A549 (cell line): ENCODE measurements at regions of chr11 and their contacts with region 1.

Region 1: DNA sequence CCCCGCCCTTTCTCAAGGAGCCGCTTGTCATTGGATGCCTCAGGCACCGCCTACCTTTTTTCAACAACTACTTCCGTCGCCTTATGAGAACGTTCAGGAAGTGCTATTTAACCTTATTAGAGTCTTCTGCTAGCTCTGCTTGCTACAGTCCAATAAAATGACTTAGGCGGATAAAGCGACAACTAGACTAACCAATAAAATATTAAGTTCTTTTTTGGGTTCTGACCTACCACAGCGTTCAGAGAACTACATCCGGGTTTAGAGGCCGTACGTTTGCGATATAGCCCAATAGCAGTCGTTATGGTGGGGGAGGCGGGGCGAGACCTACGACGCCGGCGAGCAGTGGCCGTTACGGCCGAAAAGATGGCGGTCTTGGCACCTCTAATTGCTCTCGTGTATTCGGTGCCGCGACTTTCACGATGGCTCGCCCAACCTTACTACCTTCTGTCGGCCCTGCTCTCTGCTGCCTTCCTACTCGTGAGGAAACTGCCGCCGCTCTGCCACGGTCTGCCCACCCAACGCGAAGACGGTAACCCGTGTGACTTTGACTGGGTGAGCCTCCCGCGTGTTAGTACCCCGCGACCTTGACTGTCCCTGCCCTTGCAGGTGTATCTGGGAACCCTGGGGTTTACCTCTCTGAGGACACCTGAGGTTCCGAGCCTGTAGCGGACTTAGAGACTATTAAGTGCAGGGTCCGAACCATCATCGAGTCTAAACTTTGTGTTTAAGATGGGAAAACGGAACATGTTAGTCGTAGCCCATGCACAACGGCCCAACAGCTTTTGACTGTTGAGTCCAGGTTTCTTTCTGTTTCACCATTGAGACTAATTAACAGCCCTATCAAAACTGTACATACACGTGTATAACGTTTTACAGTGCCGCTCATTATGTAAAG is at the start of gene TMX2:
- DNase-seq: peak; percentile 95 to 99
- ATAC-seq: peak; percentile 95 to 97
- H3K4me3 ChIP-seq: peak within 1 kb of the TSS; percentile 95
- H3K27ac ChIP-seq: peak within 1 kb of the TSS; percentile 92 to 96
- H3K4me1 ChIP-seq: peaks cover 32% of the 10 kb centered on the region
- CTCF ChIP-seq: no peak
- EP300 ChIP-seq: no peak
- POLR2A ChIP-seq: peak; percentile 80
- RAD21 ChIP-seq: no peak
- polyA plus RNA-seq, gene TMX2: 168 and 191 TPM in 2 replicates

Region 2: DNA sequence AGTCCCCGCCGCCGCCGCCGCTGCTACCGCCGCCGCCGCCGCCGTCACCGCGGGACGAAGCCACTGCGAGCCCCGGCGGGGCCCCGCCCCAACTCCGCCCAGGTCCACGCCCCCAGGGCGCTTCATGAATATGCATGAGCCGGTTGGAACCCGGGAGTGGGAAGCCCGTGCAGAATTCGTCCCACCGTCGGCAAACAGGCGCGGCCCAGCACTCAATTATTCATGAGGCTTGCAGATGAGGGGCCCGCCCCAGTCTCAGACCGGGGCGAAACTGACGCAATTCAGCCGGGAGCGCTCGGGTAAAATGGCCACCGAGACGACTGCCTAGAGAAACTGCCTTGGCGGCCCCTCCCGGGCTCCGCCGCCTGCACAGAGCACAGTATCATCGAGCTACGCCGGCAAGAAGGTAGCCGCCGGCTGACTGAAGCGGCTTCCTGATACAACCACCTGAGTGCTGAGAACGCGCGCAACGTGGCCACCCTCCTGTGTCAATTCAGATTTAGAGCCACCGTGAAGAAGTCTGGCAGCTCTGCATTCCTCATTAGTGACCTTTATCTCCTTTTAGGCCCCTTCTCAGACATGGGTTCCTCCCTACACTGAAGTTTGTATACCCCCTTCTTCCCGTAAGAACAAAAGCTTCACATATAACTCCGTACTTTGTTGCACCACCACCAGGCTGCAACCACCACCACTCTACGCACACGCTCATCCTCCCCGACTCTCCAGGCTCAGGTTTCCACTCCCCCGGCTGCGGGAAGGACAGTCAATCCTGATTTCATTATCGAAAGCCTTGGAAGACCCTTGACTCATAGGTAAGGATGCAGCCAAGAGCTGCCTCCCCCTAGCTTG is 387.4 kb before region 1 on chr11 and contains the start of gene TNKS1BP1:
- CTCF ChIA-PET with region 1: no interaction called
- POLR2A ChIA-PET with region 1: no interaction called
- DNase-seq: peak; percentile 94 to 97
- ATAC-seq: peak; percentile 63 to 81
- H3K4me3 ChIP-seq: peak within 1 kb of the TSS; percentile 64
- H3K27ac ChIP-seq: peak within 1 kb of the TSS; percentile 91 to 99
- H3K4me1 ChIP-seq: peaks cover 42% of the 10 kb centered on the region
- CTCF ChIP-seq: no peak
- EP300 ChIP-seq: no peak
- POLR2A ChIP-seq: peak; percentile 32
- RAD21 ChIP-seq: no peak
- polyA plus RNA-seq, gene TNKS1BP1: 35.0 and 36.5 TPM in 2 replicates

Region 3: DNA sequence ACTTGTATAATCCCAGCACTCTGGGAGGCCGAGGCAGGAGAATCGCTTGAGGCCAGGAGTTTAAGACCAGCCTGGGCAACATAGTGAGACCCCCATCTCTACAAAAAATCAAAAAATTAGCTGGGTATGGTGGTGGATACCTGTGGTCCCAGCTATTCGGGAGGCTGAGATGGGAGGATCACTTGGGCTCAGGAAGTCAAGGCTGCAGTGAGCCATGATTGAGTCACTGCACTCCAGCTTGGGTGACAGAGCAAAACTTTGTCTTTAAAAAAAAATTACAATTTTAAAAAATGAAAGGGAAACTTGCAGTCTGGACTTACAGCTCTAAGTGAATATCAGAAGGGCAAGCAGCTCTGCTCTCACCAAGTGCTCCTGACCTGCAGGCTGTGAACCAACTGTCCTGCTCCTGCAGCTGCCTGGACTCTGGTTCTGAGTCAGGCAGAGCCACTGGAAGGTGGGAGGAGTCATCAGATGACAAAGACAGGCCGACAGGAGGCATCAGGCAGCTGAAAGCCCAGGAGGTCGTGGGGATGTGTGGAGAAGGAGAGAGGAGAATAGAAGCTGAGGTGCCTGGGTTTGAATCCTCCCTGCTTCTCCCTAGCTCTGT is 165.5 kb before region 1 on chr11:
- CTCF ChIA-PET with region 1: no interaction called
- POLR2A ChIA-PET with region 1: no interaction called
- DNase-seq: peak; percentile 50 to 59
- ATAC-seq: peak; percentile 84 to 88
- H3K4me3 ChIP-seq: no peak overlapping the region
- H3K27ac ChIP-seq: no peak overlapping the region
- H3K4me1 ChIP-seq: no peaks in the 10 kb centered on the region
- CTCF ChIP-seq: no peak
- EP300 ChIP-seq: no peak
- POLR2A ChIP-seq: no peak
- RAD21 ChIP-seq: no peak

Region 4: DNA sequence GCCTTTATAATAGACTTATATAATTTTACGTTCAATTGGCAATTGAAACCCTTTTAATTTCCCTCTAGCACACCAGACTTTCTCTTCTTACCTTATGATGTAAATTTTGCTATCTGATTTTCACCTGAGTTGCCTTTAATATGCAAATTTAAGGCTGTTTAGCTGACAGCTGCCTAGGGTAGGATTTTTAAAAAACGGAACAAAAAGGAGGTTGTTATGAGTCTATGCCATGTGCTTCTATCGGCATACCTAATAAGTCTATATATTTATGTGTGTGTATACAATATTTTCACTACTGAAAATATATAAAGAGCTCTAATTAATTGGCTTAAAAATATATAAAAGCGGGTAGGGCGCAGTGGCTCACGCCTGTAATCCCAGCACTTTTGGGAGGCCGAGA is 17.0 kb after region 1 on chr11:
- CTCF ChIA-PET with region 1: interaction called, 19 read pairs
- POLR2A ChIA-PET with region 1: no interaction called
- DNase-seq: no peak
- ATAC-seq: no peak
- H3K4me3 ChIP-seq: no peak overlapping the region
- H3K27ac ChIP-seq: no peak overlapping the region
- H3K4me1 ChIP-seq: no peaks in the 10 kb centered on the region
- CTCF ChIP-seq: no peak
- EP300 ChIP-seq: no peak
- POLR2A ChIP-seq: no peak
- RAD21 ChIP-seq: no peak

Region 5: DNA sequence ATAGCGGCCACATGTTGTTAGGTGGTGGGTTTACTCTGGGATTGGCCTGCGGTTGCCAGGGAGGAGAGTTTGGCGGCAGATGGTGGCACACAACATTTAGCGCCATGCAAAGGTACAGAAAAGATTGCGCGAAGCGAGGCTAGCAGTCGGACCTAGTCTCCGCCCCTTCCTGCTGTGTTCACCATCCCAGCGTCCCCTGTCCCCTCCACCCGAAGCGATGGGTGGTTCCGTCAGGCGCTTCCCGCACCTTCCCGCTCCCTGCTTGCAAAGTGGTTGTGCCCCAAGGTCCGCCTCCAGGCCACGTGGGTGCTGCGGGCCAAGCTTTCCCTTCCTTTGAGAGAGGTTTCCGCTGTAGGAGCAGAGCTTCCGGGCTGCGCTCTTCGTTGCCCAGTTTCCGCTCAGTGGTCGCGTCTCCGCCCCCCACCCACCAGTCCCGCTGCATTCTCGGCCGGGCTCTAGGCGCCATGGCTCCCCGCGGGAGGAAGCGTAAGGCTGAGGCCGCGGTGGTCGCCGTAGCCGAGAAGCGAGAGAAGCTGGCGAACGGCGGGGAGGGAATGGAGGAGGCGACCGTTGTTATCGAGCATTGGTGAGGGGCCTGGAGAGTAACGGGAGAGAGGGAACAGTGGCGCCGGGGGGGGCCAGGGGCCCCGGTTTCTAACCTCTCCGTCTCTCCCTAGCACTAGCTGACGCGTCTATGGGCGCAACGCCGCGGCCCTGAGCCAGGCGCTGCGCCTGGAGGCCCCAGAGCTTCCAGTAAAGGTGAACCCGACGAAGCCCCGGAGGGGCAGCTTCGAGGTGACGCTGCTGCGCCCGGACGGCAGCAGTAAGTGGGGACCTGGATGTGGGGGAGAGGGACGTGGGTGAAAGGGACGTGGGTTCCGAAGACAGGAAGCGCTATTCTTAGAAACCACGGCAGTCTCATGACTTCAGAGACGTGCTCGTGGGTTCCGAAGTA is 28.9 kb after region 1 on chr11 and contains the start of gene SELENOH:
- CTCF ChIA-PET with region 1: no interaction called
- POLR2A ChIA-PET with region 1: interaction called, 23 read pairs
- DNase-seq: peak; percentile 94 to 98
- ATAC-seq: peak; percentile 97 to 98
- H3K4me3 ChIP-seq: peak within 1 kb of the TSS; percentile 88
- H3K27ac ChIP-seq: peak within 1 kb of the TSS; percentile 90 to 95
- H3K4me1 ChIP-seq: peaks cover 14% of the 10 kb centered on the region
- CTCF ChIP-seq: no peak
- EP300 ChIP-seq: no peak
- POLR2A ChIP-seq: peak; percentile 53
- RAD21 ChIP-seq: peak in 1 of 2 experiments; percentile 18; a peak in 2 of 5 replicates
- polyA plus RNA-seq, gene SELENOH: 99.7 and 115 TPM in 2 replicates